ENCODE measurements at regions of chr5 and their contacts with region 1.

Region 1: DNA sequence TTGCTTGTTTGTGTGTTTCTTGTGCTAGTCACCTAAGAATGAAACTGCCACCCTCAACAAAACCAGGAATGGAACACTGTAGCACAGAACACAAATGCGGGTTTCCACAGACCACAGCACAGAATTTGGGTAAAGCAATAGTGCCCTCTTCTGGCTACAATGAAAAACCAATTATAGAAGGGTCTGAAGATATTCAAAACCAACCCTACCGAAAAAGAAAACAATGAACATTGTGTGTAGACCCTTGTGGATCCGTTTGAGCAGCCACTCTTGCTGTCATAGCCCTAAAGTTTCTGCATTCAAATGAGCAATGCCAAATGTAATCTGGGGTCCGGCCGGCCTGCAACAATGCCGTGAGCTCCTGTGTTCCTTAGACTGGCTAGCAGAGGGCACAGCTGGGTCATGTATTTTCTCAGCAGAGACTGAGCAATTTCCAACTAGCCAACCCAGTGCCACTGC is 8.3 kb upstream of the ENC1 start:
- DNase-seq: no peak
- ATAC-seq: peak; percentile 89 to 93

Region 2: DNA sequence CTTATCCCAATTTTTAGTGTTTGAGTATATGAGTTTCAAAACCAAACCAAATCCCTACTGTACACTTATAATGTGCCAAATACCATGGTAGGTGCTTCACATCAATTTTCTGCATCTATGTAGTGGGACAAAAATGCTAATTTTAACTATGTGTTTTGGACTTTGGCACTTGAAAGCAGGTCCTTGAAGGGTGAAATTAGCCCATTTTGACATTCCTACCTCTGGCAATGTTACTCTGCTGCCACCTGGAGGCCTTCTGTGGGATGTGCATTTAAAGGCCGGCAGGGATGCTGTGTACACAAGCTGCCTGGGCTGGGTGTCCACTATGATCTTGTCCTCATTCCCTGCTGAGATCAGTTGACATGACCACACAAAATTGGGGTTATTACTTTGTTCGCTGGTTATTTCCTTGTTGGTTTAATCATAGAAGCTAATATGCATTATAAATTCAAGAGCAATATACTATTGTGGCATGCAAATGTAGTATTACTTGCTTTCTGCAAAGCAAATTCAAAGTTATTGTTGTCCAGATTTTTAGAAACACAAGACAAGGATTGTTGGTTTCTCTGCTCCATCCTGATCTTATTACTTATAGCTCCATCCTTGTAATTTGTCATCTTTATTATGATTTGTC is 856.1 kb before region 1 on chr5:
- intact Hi-C with region 1: loop called in 1 of 2 experiments (anchors 5 kb)
- DNase-seq: peak; percentile 73
- ATAC-seq: peak; percentile 81 to 82

Region 3: GRCh38 chr5:73902327-73903051 is 746.4 kb before region 1 on chr5:
- intact Hi-C with region 1: loop called (anchors 2 to 5 kb)
- DNase-seq: no peak
- ATAC-seq: peak; percentile 48 to 60

Region 4: GRCh38 chr5:73908395-73908794 is 740.5 kb before region 1 on chr5:
- intact Hi-C with region 1: loop called (anchors 2 to 5 kb)
- DNase-seq: no peak
- ATAC-seq: no peak

Region 5: DNA sequence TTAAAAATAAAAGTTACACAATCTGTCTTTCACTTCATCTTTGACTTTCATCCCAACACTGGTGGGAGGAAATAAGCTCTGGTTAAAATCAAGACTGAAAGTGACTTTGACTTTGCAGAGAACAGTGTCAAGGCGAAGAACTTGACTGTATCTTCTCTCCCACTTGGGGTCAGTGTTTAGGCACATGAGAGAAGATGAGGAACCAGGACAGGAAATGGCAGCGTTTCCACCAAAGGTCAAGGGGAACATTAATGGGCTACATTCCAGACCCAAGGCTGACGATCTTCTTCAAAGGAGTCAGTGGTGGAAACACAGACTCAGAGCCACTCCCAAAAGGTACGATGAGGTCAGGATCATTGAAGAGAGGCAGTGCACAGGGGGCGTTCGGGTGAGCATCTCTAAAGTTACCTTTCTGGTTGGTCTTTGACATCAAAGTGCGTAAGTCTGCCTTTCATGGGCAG is 613.3 kb before region 1 on chr5:
- intact Hi-C with region 1: loop called (anchors 5 to 10 kb)
- DNase-seq: peak; percentile 28
- ATAC-seq: peak; percentile 73 to 90

Region 6: GRCh38 chr5:74105126-74105780 is 543.6 kb before region 1 on chr5:
- intact Hi-C with region 1: no loop called
- DNase-seq: peak; percentile 38
- ATAC-seq: peak in 1 of 2 donors; percentile 47

Region 7: DNA sequence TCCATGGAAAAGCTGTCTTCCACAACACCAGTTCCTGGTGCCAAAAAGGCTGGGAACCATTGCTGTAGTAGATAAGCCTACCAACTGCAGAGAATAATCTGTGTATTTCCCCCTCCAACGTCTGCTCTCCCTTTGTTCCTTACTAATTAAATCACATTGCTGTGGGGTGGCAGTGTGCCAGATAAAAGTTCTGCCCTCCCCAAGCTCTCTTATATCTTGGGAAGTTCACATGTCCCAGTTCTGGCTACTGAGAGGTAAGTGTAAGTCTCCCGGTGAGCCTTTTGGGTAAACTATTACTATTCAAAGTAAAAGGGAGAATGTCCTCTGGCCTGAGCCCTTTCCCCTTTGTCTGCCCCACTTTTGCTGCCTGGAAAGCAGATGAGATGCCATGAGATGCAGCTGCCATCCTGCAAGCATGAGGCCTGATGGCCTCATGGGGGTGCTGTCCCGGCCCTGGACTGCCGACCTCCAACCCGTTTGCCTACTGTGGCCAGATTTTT is 23.1 kb before region 1 on chr5:
- intact Hi-C with region 1: no loop called
- DNase-seq: no peak
- ATAC-seq: peak; percentile 10 to 15